ENCODE measurements at regions of chr15 and their contacts with region 1.

Region 1: DNA sequence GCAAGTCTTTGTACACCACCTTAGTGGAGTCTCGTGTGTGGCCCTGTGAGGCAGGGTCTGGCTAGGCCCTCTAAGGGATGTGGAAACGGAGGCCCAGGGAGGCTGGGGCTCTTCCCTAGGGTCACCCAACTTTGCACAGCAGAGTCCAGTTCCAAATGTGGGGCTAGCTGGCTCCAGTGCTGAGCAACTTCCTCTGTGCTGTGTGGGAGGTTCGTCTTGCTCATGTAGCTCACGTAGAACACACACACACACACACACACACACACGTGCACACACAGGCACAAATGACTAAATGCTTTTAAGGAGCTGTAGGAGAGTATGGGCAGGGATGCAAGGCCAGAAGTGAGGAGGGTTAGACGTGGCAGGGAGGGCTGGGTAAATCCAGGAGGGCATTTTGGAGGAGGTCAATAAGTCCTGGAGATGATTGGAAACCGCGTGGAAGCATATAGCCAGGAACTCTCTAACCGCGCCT is 213.8 kb downstream of the RPLP1 start:
- H3K4me3 Mint-ChIP-seq: peak overlapping the region; percentile 56
- H3K27ac Mint-ChIP-seq: peak overlapping the region; percentile 84
- H3K4me1 Mint-ChIP-seq: peaks cover 64% of the 10 kb centered on the region
- H3K27me3 Mint-ChIP-seq: peaks cover 11% of the 10 kb centered on the region

Region 2: GRCh38 chr15:69576035-69576526 is 90.4 kb before region 1 on chr15:
- intact Hi-C with region 1: loop called (anchors 5 kb)
- H3K4me3 Mint-ChIP-seq: no peak overlapping the region
- H3K27ac Mint-ChIP-seq: peak overlapping the region; percentile 63
- H3K4me1 Mint-ChIP-seq: peaks cover 52% of the 10 kb centered on the region
- H3K27me3 Mint-ChIP-seq: peaks cover 32% of the 10 kb centered on the region

Region 3: GRCh38 chr15:69628371-69629093 is 37.9 kb before region 1 on chr15:
- intact Hi-C with region 1: no loop called
- H3K4me3 Mint-ChIP-seq: no peak overlapping the region
- H3K27ac Mint-ChIP-seq: no peak overlapping the region
- H3K4me1 Mint-ChIP-seq: peaks cover 51% of the 10 kb centered on the region
- H3K27me3 Mint-ChIP-seq: peaks cover 19% of the 10 kb centered on the region

Region 4: DNA sequence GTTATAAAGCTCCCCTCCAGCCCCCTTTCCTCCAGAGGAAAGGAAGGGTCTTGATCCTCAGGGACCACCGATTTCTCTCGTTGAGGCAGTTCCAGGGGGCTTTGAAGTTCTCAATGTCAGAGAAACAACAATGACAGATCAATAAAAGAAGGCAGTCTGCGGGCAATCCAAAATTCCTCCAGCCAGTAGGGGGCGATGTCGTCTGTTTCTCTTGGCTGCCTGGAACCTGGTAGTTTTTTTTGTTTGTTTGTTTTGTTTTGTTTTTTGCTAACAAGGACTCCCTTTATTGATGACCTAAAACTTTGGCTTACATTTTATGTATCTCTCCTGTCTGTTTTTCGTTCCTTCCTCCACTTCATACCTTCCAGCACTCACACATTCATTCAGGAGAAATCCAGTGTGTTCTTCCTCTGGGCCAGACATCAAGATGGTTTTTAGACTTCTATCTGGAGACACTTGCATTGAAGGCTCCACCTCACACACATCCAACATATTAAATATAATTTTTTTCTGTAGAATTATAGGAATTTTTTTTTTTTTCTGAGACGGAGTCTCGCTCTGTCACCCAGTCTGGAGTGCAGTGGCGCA is 62.8 kb after region 1 on chr15:
- intact Hi-C with region 1: loop called (anchors 1 kb)
- H3K4me3 Mint-ChIP-seq: no peak overlapping the region
- H3K27ac Mint-ChIP-seq: no peak overlapping the region
- H3K4me1 Mint-ChIP-seq: peaks cover 49% of the 10 kb centered on the region
- H3K27me3 Mint-ChIP-seq: peaks cover 3% of the 10 kb centered on the region

Region 5: GRCh38 chr15:69983771-69984170 is 317.3 kb after region 1 on chr15:
- intact Hi-C with region 1: no loop called
- H3K4me3 Mint-ChIP-seq: no peak overlapping the region
- H3K27ac Mint-ChIP-seq: no peak overlapping the region
- H3K4me1 Mint-ChIP-seq: peaks cover 5% of the 10 kb centered on the region
- H3K27me3 Mint-ChIP-seq: peaks cover 22% of the 10 kb centered on the region

Measured in dendritic cell treated with granulocyte-macrophage colony-stimulating factor and Interleukin-4, amounts not matched to agents 40 ng/mL and 50 ng/mL, for 4 days (primary cell).